Posterior vena cava (tissue), 2 donors: ENCODE measurements at regions of chr9 and their contacts with region 1.

Region 1: DNA sequence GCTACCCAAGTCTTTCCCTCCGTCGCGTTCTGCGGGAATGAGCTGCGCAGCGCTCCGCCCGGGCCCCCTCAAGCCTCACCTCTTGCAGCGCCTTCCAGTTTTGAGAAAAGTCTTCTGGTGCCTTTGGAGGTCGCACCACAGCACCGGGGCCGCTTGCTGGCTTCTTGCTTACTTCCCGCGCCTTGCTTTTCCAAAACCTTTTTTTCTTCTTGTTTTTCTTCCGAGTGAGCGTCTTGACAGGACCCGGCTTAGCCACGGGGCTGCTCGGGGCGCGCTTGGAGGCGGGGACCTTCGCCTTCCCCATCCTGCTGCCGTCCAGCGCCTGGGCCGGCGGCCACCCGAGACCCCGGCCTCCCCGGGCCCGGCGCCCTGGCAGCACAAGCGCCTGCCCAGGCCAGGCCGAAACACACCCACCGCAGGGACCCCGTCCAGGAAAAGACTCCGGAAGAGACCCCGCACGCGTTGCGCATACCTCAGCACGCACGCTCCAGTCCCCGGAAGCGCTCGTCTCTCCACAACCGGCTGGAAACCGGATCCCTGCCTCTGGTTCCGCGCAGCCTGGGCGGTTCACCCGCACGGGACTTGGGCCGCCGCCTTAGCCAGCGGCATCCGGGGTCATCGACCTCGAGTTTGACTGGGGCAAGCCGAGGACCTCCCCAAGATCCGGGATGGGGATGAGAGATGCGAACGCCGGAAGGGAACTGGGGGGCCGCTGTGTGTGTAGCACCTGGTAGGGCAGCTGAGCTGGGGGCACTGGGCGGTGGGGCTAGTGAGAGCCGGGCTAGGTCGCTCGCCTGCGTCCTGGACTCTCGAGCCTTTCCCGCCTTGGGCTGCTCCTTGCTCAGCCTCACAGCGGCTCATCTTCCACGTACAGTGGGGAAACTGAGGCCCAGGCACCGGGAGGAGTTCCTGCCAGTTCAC is at the start of gene REXO4:
- DNase-seq: peak; percentile 95
- total RNA-seq, gene REXO4: 10.4 to 11.1 TPM

Region 2: DNA sequence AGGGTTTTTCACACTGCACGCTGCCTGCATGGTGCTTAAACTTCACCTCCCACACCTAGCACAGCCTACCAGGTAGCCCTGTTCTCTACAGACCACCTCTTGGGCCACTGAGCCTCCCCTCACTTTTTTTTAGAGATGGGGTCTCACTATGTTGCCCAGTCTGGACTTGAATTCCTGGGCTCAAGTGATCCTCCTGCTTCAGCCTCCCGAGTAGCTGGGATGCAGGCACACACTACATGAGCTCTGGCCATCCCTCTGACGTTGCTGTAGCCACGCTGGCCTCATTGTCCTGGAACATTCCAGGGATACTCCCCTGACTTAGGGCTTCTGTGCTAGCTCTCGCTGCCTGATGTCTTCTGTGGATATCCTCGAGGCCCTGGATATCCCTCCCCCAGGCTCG is 34.8 kb after region 1 on chr9:
- intact Hi-C with region 1: loop called in 1 of 2 experiments (anchors 1 kb)
- DNase-seq: no peak

Region 3: DNA sequence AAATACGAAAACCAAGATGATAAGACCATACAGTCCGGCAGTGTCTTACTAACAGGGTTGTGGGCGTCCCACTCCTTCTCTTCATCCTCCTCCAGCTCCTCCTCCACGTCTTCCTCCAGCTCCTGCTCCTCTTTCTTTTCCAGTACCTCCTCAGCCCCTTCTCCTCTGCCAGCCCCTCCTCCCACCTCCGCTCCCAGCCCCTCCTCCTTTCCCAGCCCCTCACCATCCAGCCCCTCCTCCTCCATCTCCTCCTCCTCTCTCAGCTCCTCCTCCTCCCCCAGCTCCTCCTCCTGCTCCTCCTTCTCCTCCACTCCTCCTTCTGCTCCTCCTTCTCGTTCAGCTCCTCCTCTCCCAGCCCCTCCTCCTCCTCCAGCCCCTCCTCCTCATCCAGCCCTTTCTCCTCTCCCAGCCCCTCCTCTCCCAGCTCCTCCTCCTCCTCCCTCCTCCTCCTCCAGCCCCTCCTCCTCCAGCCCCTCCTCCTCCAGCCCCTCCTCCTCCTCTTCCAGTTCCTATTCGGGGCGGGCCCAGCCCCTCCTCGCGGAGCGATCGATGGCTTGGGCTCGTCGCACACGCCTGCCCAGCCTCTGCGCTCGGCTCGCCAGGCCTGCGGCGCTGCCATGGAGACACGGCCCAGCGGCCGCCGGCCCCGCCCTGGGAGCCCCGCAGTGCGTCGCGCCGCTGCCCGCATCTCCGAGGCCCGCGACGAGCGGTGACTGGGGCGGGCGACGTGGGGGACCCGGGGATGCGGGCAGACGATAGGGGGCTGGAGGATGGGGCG is 607.2 kb after region 1 on chr9 and contains the start of gene BRD3OS:
- intact Hi-C with region 1: loop called in 1 of 2 experiments (anchors 5 kb)
- DNase-seq: peak; percentile 99
- total RNA-seq, gene BRD3OS: 11.9 to 14.3 TPM